WTC11 (cell line): ENCODE measurements at regions of chr3 and their contacts with region 1.

Region 1: DNA sequence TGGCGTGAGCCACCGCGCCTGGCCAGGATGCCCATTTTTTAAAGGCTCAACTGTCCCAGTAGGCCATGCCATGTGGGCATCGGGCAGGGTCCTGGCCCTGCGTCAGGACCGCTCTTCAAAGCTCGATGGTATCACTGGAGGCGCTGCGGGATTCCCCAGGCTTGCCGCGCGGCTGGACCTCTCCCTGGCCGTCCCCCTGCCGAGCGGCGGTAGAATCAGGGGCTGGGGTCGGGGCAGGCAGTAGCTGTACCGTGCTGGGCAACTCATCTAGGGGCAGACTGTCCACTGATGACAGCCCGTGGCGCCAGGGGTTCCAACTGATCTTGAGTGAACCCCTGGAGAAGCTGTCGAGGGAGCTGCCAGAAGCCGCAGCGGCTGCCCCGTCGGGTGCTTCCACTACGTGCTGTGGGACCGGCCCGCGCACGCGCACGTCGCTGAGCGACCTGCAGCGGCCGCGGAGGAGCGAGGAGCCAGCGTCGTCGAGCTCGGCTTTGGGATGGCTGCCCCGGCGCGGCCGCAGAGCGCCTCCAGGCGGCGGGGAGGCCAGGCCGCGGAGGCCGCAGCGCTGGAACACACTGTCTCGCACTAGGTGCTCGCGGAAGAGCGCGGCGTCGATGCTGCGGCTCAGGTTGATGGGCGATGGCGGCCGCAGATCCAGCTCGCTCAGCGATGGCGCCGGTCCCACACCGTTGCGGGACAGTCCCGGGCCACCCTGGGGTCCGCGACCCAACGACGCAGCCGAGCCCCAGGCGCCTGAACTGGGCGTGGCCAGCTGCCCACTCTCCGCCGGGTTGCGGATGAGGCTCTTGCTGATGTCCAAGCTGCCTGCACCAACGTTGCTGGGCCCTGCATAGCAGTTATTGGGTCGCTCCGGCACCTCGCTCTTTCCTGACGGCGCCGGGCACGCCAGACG is 5.8 kb downstream of the PRRT3 start:
- DNase-seq: peak; percentile 86
- ATAC-seq: peak; percentile 75
- H3K4me3 Mint-ChIP-seq: peak overlapping the region; percentile 78
- H3K27ac Mint-ChIP-seq: no peak overlapping the region; the same call in 1 of the 2 replicates
- H3K4me1 Mint-ChIP-seq: peaks cover 3% of the 10 kb centered on the region
- H3K27me3 Mint-ChIP-seq: no peaks in the 10 kb centered on the region; the same call in 1 of the 2 replicates
- CTCF ChIP-seq: no peak

Region 2: GRCh38 chr3:9808345-9809037 is 137.9 kb before region 1 on chr3:
- CTCF ChIA-PET with region 1: interaction called, 13 read pairs
- POLR2A ChIA-PET with region 1: no interaction called
- DNase-seq: peak; percentile 64
- ATAC-seq: peak; percentile 46
- H3K4me3 Mint-ChIP-seq: no peak overlapping the region
- H3K27ac Mint-ChIP-seq: peak overlapping the region; percentile 77
- H3K4me1 Mint-ChIP-seq: peaks cover 23% of the 10 kb centered on the region
- H3K27me3 Mint-ChIP-seq: peaks cover 17% of the 10 kb centered on the region
- CTCF ChIP-seq: no peak

Region 3: GRCh38 chr3:9843715-9844438 is 102.5 kb before region 1 on chr3 and contains the start of gene RPUSD3:
- CTCF ChIA-PET with region 1: interaction called, 26 read pairs
- POLR2A ChIA-PET with region 1: no interaction called
- DNase-seq: peak; percentile 99
- ATAC-seq: peak; percentile 97
- H3K4me3 Mint-ChIP-seq: peak within 1 kb of the TSS; percentile 98
- H3K27ac Mint-ChIP-seq: peak within 1 kb of the TSS; percentile 91
- H3K4me1 Mint-ChIP-seq: peaks cover 9% of the 10 kb centered on the region
- H3K27me3 Mint-ChIP-seq: no peaks in the 10 kb centered on the region
- CTCF ChIP-seq: no peak
- total RNA-seq, gene RPUSD3: 83.0 to 95.5 TPM (median 90.8 TPM) in 3 replicates

Region 4: GRCh38 chr3:9897408-9898372 is 48.7 kb before region 1 on chr3:
- CTCF ChIA-PET with region 1: interaction called, 13 read pairs
- POLR2A ChIA-PET with region 1: no interaction called
- DNase-seq: no peak
- ATAC-seq: no peak
- H3K4me3 Mint-ChIP-seq: no peak overlapping the region
- H3K27ac Mint-ChIP-seq: no peak overlapping the region
- H3K4me1 Mint-ChIP-seq: peaks cover 7% of the 10 kb centered on the region
- H3K27me3 Mint-ChIP-seq: no peaks in the 10 kb centered on the region; the same call in 1 of the 2 replicates
- CTCF ChIP-seq: no peak

Region 5: GRCh38 chr3:9932843-9933560 is 13.4 kb before region 1 on chr3:
- CTCF ChIA-PET with region 1: interaction called, 143 read pairs
- POLR2A ChIA-PET with region 1: interaction called, 35 read pairs
- DNase-seq: peak; percentile 88
- ATAC-seq: peak; percentile 71
- H3K4me3 Mint-ChIP-seq: peak overlapping the region; percentile 93
- H3K27ac Mint-ChIP-seq: peak overlapping the region; percentile 53; the same call in 1 of the 2 replicates
- H3K4me1 Mint-ChIP-seq: peaks cover 14% of the 10 kb centered on the region
- H3K27me3 Mint-ChIP-seq: peaks cover 10% of the 10 kb centered on the region
- CTCF ChIP-seq: peak; percentile 33

Region 6: DNA sequence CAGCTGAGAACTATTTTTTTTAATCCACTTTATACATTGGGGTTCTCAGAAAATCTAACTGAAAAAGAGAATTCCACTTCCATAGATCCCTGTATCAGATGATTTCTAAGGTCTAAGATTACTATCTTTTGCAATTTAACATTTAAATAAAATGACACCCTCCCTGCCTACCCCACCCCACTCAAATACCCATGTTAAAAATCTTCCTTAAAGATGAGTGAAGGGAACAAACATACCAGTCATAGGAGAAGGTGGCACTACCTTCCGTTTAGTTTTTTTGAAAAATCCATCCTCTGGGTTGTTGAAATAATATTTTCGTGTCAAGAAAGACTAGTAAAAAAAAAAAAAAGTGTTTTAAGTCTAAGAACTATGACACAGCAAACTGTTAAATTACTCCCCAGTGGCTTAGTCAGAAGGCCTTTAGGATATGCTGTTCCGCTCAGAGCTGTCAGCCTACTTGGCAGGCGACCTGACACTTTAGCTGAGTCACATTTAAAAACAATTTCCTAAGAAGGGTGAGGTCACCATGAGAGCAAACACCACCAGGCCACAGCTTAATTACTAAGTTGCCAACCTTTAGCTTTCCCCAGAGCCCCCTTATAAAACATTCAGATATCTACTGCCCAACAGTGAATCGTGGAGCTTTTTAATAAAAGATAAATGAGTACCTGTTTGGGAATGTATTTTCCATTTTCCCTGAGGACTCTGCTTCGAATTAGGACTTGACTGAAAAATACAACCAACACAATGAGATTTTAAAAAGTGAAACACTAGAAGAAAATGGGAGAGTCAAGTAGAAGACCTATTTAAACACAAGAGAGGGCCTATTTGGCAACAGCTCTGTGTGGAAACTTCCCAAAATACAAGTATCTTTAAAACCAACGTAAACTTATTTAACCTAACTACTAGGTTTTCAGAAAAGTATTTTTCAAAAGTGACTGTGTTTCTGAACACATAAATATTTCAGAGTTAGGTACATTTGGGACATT is 30.6 kb after region 1 on chr3:
- CTCF ChIA-PET with region 1: interaction called, 10 read pairs
- POLR2A ChIA-PET with region 1: no interaction called
- DNase-seq: no peak
- ATAC-seq: no peak
- H3K4me3 Mint-ChIP-seq: no peak overlapping the region
- H3K27ac Mint-ChIP-seq: no peak overlapping the region
- H3K4me1 Mint-ChIP-seq: no peaks in the 10 kb centered on the region
- H3K27me3 Mint-ChIP-seq: no peaks in the 10 kb centered on the region
- CTCF ChIP-seq: no peak